A549 (cell line): ENCODE measurements at regions of chr2 and their contacts with region 1.

Region 1: GRCh38 chr2:42117923-42118753 is 51.0 kb upstream of the EML4 start:
- DNase-seq: peak in 1 of 2 experiments; percentile 86
- ATAC-seq: peak; percentile 90 to 91
- H3K4me3 ChIP-seq: no peak overlapping the region
- H3K27ac ChIP-seq: peak overlapping the region; percentile 60 to 63
- H3K4me1 ChIP-seq: peaks cover 34% of the 10 kb centered on the region
- CTCF ChIP-seq: no peak
- EP300 ChIP-seq: peak in 1 of 2 experiments; percentile 67; a peak in 2 of 5 replicates
- POLR2A ChIP-seq: no peak
- RAD21 ChIP-seq: peak; percentile 34 to 40; a peak in 4 of 5 replicates

Region 2: DNA sequence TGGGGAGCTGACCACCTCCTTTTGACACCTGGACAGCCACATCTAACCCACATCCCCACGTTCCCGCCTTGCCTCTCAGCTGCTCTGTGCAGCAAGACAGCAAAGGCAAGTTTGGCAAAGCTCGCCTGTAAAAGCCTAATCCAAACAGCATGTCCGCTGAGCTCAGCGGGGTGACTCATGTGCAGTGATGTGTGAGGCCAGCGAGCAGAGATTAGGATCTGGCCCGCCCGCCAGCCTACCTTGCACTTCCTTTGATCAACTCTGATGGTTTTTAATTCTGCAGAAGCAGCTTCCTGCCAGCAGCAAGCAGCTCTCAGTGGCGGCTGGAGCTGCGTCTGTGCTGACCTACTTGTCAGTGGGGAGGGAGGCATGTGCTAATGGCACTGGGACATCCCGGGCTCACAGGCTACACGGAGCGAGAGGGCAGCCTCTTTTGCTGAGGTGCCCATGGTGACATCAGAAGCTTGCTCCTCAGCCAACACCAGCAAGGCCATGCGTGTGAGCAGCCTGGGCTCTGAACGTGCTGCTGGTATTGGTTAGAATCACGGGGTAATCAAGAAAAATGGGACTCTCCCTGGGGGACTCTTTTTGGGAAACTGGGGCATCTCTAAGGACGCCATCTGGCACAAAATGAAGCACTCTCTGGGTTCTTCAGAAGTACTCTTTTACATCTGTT is 15.0 kb after region 1 on chr2:
- CTCF ChIA-PET with region 1: interaction called, 7 read pairs
- POLR2A ChIA-PET with region 1: interaction called, 12 read pairs
- DNase-seq: peak; percentile 89 to 94
- ATAC-seq: peak; percentile 91 to 93
- H3K4me3 ChIP-seq: peak overlapping the region; percentile 18; the same call in 1 of the 3 replicates
- H3K27ac ChIP-seq: peak overlapping the region; percentile 75 to 87
- H3K4me1 ChIP-seq: peaks cover 72% of the 10 kb centered on the region
- CTCF ChIP-seq: no peak
- EP300 ChIP-seq: peak; percentile 72 to 80; a peak in 3 of 5 replicates
- POLR2A ChIP-seq: no peak
- RAD21 ChIP-seq: peak in 1 of 2 experiments; percentile 41; a peak in 4 of 5 replicates

Region 3: DNA sequence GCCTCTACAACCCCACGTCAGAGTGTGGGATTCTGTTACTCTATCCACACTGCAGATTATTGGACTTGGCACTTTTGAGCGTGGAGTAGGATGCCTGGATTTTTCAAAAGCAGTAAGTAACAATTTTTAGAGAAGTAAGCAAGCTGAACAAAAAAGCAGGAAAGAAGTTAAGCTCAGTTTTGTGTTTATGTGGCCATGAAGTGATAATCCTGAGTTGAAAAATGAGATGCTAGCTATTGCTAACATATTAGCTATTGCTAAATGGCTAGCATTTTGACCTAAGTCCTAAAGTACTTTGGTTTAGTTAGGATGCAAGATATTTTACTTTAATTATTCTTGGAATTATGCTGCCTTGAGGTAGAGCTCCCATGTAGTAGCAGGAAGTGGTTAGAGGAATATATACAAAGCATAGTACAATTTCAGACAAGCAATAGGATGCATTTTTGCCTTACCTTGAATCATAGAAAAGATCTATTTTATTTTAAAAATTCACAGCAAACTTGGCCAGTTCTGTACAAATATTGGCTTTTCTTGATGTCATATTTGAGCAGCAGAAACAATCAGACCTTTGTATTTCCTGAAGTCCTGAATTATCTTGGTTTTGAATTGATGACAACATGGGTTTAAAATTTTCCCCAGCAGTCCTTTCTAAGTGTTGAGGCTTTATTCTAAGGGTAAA is 168.3 kb after region 1 on chr2:
- CTCF ChIA-PET with region 1: no interaction called
- POLR2A ChIA-PET with region 1: no interaction called
- DNase-seq: no peak
- ATAC-seq: no peak
- H3K4me3 ChIP-seq: no peak overlapping the region
- H3K27ac ChIP-seq: no peak overlapping the region
- H3K4me1 ChIP-seq: peaks cover 9% of the 10 kb centered on the region; the same call in 1 of the 3 replicates
- CTCF ChIP-seq: no peak
- EP300 ChIP-seq: no peak
- POLR2A ChIP-seq: no peak
- RAD21 ChIP-seq: no peak